Posterior vena cava (tissue), 2 donors: ENCODE measurements at regions of chr15 and their contacts with region 1.

Region 1: GRCh38 chr15:77733579-77734300 is 101.0 kb upstream of the LINGO1 start:
- DNase-seq: no peak

Region 2: DNA sequence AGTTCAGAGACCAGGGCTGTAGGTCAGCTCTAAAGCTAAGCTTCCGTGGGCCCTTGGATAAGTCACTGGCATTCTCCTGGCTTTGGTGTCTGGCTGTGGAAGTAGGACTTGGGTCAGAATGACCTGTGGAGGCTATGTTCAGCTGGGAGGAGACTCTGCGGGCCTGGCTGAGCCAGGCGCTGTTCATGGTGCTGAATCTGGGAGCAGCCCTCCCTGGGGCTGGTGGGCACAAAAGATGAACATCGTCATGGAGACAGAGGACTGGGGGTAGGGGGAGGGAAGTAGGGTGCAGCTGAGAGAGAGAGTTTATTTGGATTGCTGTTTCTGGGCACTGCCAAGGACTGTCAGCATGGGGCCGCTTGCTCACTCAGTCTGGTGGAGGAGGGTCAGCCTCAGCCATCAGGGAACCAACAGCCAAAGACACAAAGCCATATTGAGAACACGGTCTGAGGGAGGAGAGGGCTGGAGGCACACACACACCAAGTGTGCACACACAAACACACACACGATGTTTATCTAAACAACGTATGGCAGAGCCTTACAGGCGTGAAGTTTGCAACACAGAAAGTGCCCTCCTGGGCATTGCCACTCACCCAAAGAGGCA is 19.6 kb after region 1 on chr15:
- intact Hi-C with region 1: loop called in 1 of 2 experiments (anchors 1 kb)
- DNase-seq: no peak

Region 3: GRCh38 chr15:78461171-78461888 is 727.6 kb after region 1 on chr15:
- intact Hi-C with region 1: no loop called
- DNase-seq: no peak